Dendritic cell treated with granulocyte-macrophage colony-stimulating factor and Interleukin-4, amounts not matched to agents 40 ng/mL and 50 ng/mL, for 4 days (primary cell): ENCODE measurements at regions of chr2 and their contacts with region 1.

Region 1: GRCh38 chr2:42360890-42361727 is at the start of gene COX7A2L:
- H3K4me3 Mint-ChIP-seq: peak within 1 kb of the TSS; percentile 91
- H3K27ac Mint-ChIP-seq: peak within 1 kb of the TSS; percentile 94
- H3K4me1 Mint-ChIP-seq: peaks cover 38% of the 10 kb centered on the region
- H3K27me3 Mint-ChIP-seq: peaks cover 9% of the 10 kb centered on the region

Region 2: GRCh38 chr2:41720331-41720730 is 640.8 kb before region 1 on chr2:
- intact Hi-C with region 1: loop called (anchors 10 kb)
- H3K4me3 Mint-ChIP-seq: no peak overlapping the region
- H3K27ac Mint-ChIP-seq: no peak overlapping the region
- H3K4me1 Mint-ChIP-seq: peaks cover 14% of the 10 kb centered on the region
- H3K27me3 Mint-ChIP-seq: no peaks in the 10 kb centered on the region

Region 3: GRCh38 chr2:42457011-42457410 is 95.9 kb after region 1 on chr2:
- intact Hi-C with region 1: no loop called
- H3K4me3 Mint-ChIP-seq: no peak overlapping the region
- H3K27ac Mint-ChIP-seq: no peak overlapping the region
- H3K4me1 Mint-ChIP-seq: no peaks in the 10 kb centered on the region
- H3K27me3 Mint-ChIP-seq: peaks cover 21% of the 10 kb centered on the region